ENCODE measurements at regions of chr2 and their contacts with region 1.

Region 1: GRCh38 chr2:72579591-72580180 is 246.1 kb downstream of the EXOC6B start:
- DNase-seq: no peak
- ATAC-seq: peak in 4 of 8 donors; percentile 11 to 59 (median 30)
- H3K4me3 ChIP-seq: no peak overlapping the region
- H3K27ac ChIP-seq: no peak overlapping the region
- H3K4me1 ChIP-seq: peaks cover 0 to 39% (median 11%) of the 10 kb centered on the region in 9 donors
- H3K27me3 ChIP-seq: no peaks in the 10 kb centered on the region
- CTCF ChIP-seq: peak; percentile 53 to 83 (median 67)

Region 2: DNA sequence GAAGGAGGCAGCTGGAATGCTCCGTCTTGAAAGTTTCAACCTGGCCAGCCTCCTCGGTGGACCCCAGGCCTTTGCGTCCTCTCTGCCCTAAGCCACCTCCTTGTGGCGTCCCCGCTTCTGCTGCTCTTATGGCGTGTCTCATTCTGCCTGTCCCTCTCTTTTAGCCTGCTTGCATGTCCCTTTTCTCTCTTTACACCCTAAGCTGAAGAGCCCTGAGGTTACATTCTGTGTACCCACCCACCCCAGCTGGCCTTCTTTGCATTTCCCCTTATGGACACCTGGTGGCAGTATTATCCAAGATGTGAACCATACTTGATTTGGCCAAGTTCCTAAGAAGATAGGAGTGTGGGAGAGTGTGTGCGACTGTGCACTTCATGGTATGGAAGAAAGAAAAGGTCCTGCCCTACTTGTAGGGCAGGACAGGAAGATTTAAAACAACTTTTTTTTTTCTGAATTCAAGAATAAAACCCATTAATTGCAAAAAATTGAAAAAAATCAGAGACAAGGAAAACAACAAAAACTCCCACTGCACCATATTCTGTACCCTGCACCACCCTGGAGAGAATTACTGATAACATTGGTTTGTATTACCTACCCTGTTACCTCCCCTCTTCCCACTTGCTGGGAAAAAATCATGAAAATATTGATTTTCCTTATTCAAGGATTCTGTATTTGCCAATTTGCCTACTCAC is 1048.9 kb before region 1 on chr2:
- intact Hi-C with region 1: loop called in 1 of 10 experiments (anchors 10 kb)
- DNase-seq: no peak
- ATAC-seq: peak in 6 of 8 donors; percentile 28 to 55 (median 48)
- H3K4me3 ChIP-seq: no peak overlapping the region
- H3K27ac ChIP-seq: no peak overlapping the region
- H3K4me1 ChIP-seq: peaks cover 0 to 12% (median 0%) of the 10 kb centered on the region in 9 donors
- H3K27me3 ChIP-seq: no peaks in the 10 kb centered on the region
- CTCF ChIP-seq: peak; percentile 35 to 77 (median 64)

Region 3: GRCh38 chr2:71545572-71546274 is 1034.0 kb before region 1 on chr2:
- intact Hi-C with region 1: loop called in 5 of 10 experiments (anchors 2 to 10 kb)
- DNase-seq: peak in 1 of 2 donors; percentile 55
- ATAC-seq: peak; percentile 59 to 83 (median 78)
- H3K4me3 ChIP-seq: peak overlapping the region in 6 of 10 donors; percentile 15 to 30 (median 24)
- H3K27ac ChIP-seq: peak overlapping the region in 9 of 10 donors; percentile 34 to 79 (median 71)
- H3K4me1 ChIP-seq: peaks cover 0 to 17% (median 13%) of the 10 kb centered on the region in 9 donors
- H3K27me3 ChIP-seq: no peaks in the 10 kb centered on the region
- CTCF ChIP-seq: peak; percentile 66 to 83 (median 75)

Region 4: GRCh38 chr2:72165792-72166191 is 413.9 kb before region 1 on chr2:
- intact Hi-C with region 1: loop called in 1 of 10 experiments (anchors 10 kb)
- DNase-seq: no peak
- ATAC-seq: no peak
- H3K4me3 ChIP-seq: no peak overlapping the region
- H3K27ac ChIP-seq: no peak overlapping the region
- H3K4me1 ChIP-seq: no peaks in the 10 kb centered on the region
- H3K27me3 ChIP-seq: no peaks in the 10 kb centered on the region
- CTCF ChIP-seq: no peak

Region 5: GRCh38 chr2:72745679-72746368 is 166.1 kb after region 1 on chr2:
- intact Hi-C with region 1: loop called in 2 of 10 experiments (anchors 10 kb)
- DNase-seq: peak in 1 of 2 donors; percentile 13
- ATAC-seq: peak in 5 of 8 donors; percentile 33 to 65 (median 39)
- H3K4me3 ChIP-seq: no peak overlapping the region
- H3K27ac ChIP-seq: no peak overlapping the region
- H3K4me1 ChIP-seq: peaks cover 0 to 63% (median 33%) of the 10 kb centered on the region in 9 donors
- H3K27me3 ChIP-seq: no peaks in the 10 kb centered on the region
- CTCF ChIP-seq: peak; percentile 32 to 82 (median 73)